ENCODE measurements at regions of chr1 and their contacts with region 1.

Region 1: GRCh38 chr1:200302192-200302920 is 107.5 kb downstream of the ZNF281 start:
- DNase-seq: peak; percentile 61
- H3K4me3 ChIP-seq: peak overlapping the region; percentile 66
- H3K27ac ChIP-seq: no peak overlapping the region
- H3K4me1 ChIP-seq: peaks cover 58% of the 10 kb centered on the region
- CTCF ChIP-seq: peak; percentile 55

Region 2: GRCh38 chr1:199684686-199685273 is 617.6 kb before region 1 on chr1:
- CTCF ChIA-PET with region 1: no interaction called
- POLR2A ChIA-PET with region 1: no interaction called
- intact Hi-C with region 1: loop called (anchors 10 kb)
- DNase-seq: peak; percentile 62
- H3K4me3 ChIP-seq: no peak overlapping the region
- H3K27ac ChIP-seq: no peak overlapping the region
- H3K4me1 ChIP-seq: no peaks in the 10 kb centered on the region
- CTCF ChIP-seq: peak; percentile 93

Region 3: GRCh38 chr1:200258447-200259375 is 43.6 kb before region 1 on chr1:
- CTCF ChIA-PET with region 1: no interaction called
- POLR2A ChIA-PET with region 1: no interaction called
- intact Hi-C with region 1: loop called (anchors 5 kb)
- DNase-seq: peak; percentile 75
- H3K4me3 ChIP-seq: no peak overlapping the region
- H3K27ac ChIP-seq: no peak overlapping the region
- H3K4me1 ChIP-seq: no peaks in the 10 kb centered on the region
- CTCF ChIP-seq: peak; percentile 78

Region 4: DNA sequence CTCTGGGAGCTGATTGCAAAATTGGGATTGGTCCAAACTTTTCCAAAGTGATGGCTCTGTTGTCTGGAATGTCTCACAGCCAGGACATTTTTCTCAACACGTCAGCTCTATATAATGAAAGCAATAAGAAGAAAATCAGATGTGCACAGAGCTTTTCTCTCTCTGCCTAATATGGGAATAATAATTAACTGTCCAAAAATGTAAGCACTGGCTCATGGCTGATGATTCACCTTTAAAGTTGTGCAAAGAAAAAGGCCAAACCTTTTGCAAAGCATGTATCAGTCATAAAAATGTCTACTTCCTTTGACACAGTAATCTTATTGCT is 77.0 kb after region 1 on chr1:
- CTCF ChIA-PET with region 1: no interaction called
- POLR2A ChIA-PET with region 1: interaction called, 4 read pairs
- intact Hi-C with region 1: loop called (anchors 2 kb)
- DNase-seq: no peak
- H3K4me3 ChIP-seq: peak overlapping the region; percentile 53
- H3K27ac ChIP-seq: peak overlapping the region; percentile 83
- H3K4me1 ChIP-seq: peaks cover 76% of the 10 kb centered on the region
- CTCF ChIP-seq: no peak

Region 5: GRCh38 chr1:200488375-200489165 is 186.2 kb after region 1 on chr1:
- CTCF ChIA-PET with region 1: no interaction called
- POLR2A ChIA-PET with region 1: no interaction called
- intact Hi-C with region 1: loop called (anchors 2 kb)
- DNase-seq: peak; percentile 74
- H3K4me3 ChIP-seq: no peak overlapping the region
- H3K27ac ChIP-seq: no peak overlapping the region
- H3K4me1 ChIP-seq: no peaks in the 10 kb centered on the region
- CTCF ChIP-seq: peak; percentile 95